ENCODE measurements at regions of chr14 and their contacts with region 1.

Region 1: GRCh38 chr14:103141119-103141796 is 18.0 kb downstream of the TNFAIP2 start:
- DNase-seq: peak; percentile 53
- H3K4me3 ChIP-seq: no peak overlapping the region
- H3K27ac ChIP-seq: no peak overlapping the region
- H3K4me1 ChIP-seq: peaks cover 6% of the 10 kb centered on the region
- H3K27me3 ChIP-seq: peaks cover 11% of the 10 kb centered on the region
- CTCF ChIP-seq: peak; percentile 35

Region 2: GRCh38 chr14:103104654-103105452 is 36.4 kb before region 1 on chr14:
- intact Hi-C with region 1: loop called (anchors 5 kb)
- DNase-seq: peak; percentile 82
- H3K4me3 ChIP-seq: no peak overlapping the region
- H3K27ac ChIP-seq: no peak overlapping the region
- H3K4me1 ChIP-seq: peaks cover 15% of the 10 kb centered on the region
- H3K27me3 ChIP-seq: peaks cover 23% of the 10 kb centered on the region
- CTCF ChIP-seq: peak; percentile 92

Region 3: GRCh38 chr14:103444837-103445524 is 303.7 kb after region 1 on chr14:
- intact Hi-C with region 1: no loop called
- DNase-seq: no peak
- H3K4me3 ChIP-seq: no peak overlapping the region
- H3K27ac ChIP-seq: no peak overlapping the region
- H3K4me1 ChIP-seq: no peaks in the 10 kb centered on the region
- H3K27me3 ChIP-seq: no peaks in the 10 kb centered on the region
- CTCF ChIP-seq: no peak

Measured in colonic mucosa (tissue), 4 donors.